Activated T-helper 1 cell treated with anti-CD3 and anti-CD28 coated beads, Interleukin-12 subunit alpha, Interleukin-12 subunit beta, Interleukin-2, Interleukin-4 antibody, amounts not matched to agents 30 ng/mL and 10 ng/mL and 1 ng/mL, durations not matched to agents 14 hours and 24 hours and 36 hours (primary cell): ENCODE measurements at regions of chr1 and their contacts with region 1.

Region 1: GRCh38 chr1:202135221-202135721 is 9.3 kb downstream of the ARL8A start:
- DNase-seq: peak; percentile 24
- H3K4me3 Mint-ChIP-seq: no peak overlapping the region
- H3K27ac Mint-ChIP-seq: no peak overlapping the region
- H3K4me1 Mint-ChIP-seq: no peaks in the 10 kb centered on the region
- H3K27me3 Mint-ChIP-seq: no peaks in the 10 kb centered on the region

Region 2: GRCh38 chr1:201895913-201896807 is 239.1 kb before region 1 on chr1:
- intact Hi-C with region 1: loop called (anchors 1 kb)
- DNase-seq: peak; percentile 80
- H3K4me3 Mint-ChIP-seq: peak overlapping the region; percentile 27
- H3K27ac Mint-ChIP-seq: peak overlapping the region; percentile 41
- H3K4me1 Mint-ChIP-seq: peaks cover 10% of the 10 kb centered on the region
- H3K27me3 Mint-ChIP-seq: peaks cover 8% of the 10 kb centered on the region

Region 3: GRCh38 chr1:201937624-201938213 is 197.6 kb before region 1 on chr1:
- intact Hi-C with region 1: no loop called
- DNase-seq: no peak
- H3K4me3 Mint-ChIP-seq: no peak overlapping the region
- H3K27ac Mint-ChIP-seq: no peak overlapping the region
- H3K4me1 Mint-ChIP-seq: no peaks in the 10 kb centered on the region
- H3K27me3 Mint-ChIP-seq: peaks cover 12% of the 10 kb centered on the region

Region 4: GRCh38 chr1:201999625-202000238 is 135.5 kb before region 1 on chr1:
- intact Hi-C with region 1: loop called (anchors 1 kb)
- DNase-seq: no peak
- H3K4me3 Mint-ChIP-seq: no peak overlapping the region
- H3K27ac Mint-ChIP-seq: no peak overlapping the region
- H3K4me1 Mint-ChIP-seq: no peaks in the 10 kb centered on the region
- H3K27me3 Mint-ChIP-seq: no peaks in the 10 kb centered on the region

Region 5: GRCh38 chr1:202009326-202010179 is 125.7 kb before region 1 on chr1:
- intact Hi-C with region 1: loop called (anchors 1 kb)
- DNase-seq: peak; percentile 42
- H3K4me3 Mint-ChIP-seq: no peak overlapping the region
- H3K27ac Mint-ChIP-seq: no peak overlapping the region
- H3K4me1 Mint-ChIP-seq: no peaks in the 10 kb centered on the region
- H3K27me3 Mint-ChIP-seq: no peaks in the 10 kb centered on the region